ENCODE measurements at regions of chr5 and their contacts with region 1.

Region 1: DNA sequence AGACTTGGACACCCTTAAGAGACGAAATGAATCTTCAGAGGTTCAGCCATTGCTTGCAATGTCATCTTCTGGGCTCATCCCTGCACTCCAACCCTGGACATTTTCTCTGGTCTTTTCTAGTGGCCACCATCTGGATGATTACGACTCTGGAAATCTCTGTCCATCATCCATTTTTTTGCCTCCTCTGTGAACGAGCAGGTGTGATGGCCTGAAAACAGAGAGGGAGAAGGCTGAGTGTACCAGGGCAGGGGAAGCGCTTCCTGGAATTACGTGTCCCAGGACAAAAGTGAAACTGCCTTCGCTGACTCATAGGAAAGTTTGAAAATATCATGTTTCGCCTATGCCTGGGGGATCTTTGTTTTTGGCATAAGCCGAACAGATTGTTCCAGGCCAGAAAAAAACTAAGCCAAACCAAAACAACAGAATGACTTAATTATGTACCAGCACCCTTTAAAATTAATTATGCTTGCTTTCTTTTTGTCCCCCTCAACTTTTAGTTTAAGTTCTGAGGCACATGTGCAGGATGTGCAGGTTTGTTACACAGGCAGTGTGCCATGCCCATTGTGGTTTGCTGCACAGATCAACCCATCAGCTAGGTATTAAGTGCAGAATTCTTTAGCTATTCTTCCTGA is 31.9 kb downstream of the ANKRD33B start:
- DNase-seq: peak; percentile 28
- H3K4me3 Mint-ChIP-seq: peak overlapping the region; percentile 7
- H3K27ac Mint-ChIP-seq: peak overlapping the region; percentile 79
- H3K4me1 Mint-ChIP-seq: peaks cover 69% of the 10 kb centered on the region
- H3K27me3 Mint-ChIP-seq: no peaks in the 10 kb centered on the region

Region 2: GRCh38 chr5:10577371-10578292 is 18.2 kb before region 1 on chr5:
- intact Hi-C with region 1: loop called (anchors 1 kb)
- DNase-seq: no peak
- H3K4me3 Mint-ChIP-seq: no peak overlapping the region
- H3K27ac Mint-ChIP-seq: peak overlapping the region; percentile 30
- H3K4me1 Mint-ChIP-seq: peaks cover 66% of the 10 kb centered on the region
- H3K27me3 Mint-ChIP-seq: no peaks in the 10 kb centered on the region

Region 3: GRCh38 chr5:10607666-10608073 is 11.9 kb after region 1 on chr5:
- intact Hi-C with region 1: loop called (anchors 1 kb)
- DNase-seq: no peak
- H3K4me3 Mint-ChIP-seq: peak overlapping the region; percentile 77
- H3K27ac Mint-ChIP-seq: peak overlapping the region; percentile 96
- H3K4me1 Mint-ChIP-seq: peaks cover 45% of the 10 kb centered on the region
- H3K27me3 Mint-ChIP-seq: no peaks in the 10 kb centered on the region

Region 4: GRCh38 chr5:10655161-10655971 is 59.6 kb after region 1 on chr5:
- intact Hi-C with region 1: no loop called
- DNase-seq: no peak
- H3K4me3 Mint-ChIP-seq: no peak overlapping the region
- H3K27ac Mint-ChIP-seq: no peak overlapping the region
- H3K4me1 Mint-ChIP-seq: no peaks in the 10 kb centered on the region
- H3K27me3 Mint-ChIP-seq: no peaks in the 10 kb centered on the region

Region 5: DNA sequence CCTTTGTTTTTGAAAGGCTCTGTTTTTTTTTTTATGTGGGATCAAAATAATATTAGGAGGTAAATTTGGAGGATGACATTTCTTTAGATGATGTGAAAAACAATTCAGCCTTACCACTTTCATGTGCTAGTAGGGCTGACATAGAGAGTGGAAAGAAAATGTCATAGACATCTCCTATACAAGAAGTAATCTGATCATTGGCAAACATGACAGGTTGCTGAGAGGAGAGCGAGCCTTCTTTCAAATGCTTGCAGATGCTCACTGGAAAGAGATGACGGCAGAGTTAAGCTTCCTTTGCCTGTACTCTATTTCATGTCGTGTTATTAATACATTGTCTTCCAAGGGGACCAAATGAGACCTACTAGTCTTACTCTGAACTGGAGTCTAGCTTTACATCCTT is 325.4 kb after region 1 on chr5:
- intact Hi-C with region 1: no loop called
- DNase-seq: no peak
- H3K4me3 Mint-ChIP-seq: no peak overlapping the region
- H3K27ac Mint-ChIP-seq: no peak overlapping the region
- H3K4me1 Mint-ChIP-seq: no peaks in the 10 kb centered on the region
- H3K27me3 Mint-ChIP-seq: no peaks in the 10 kb centered on the region

Measured in activated T-helper 2 cell treated with anti-CD3 and anti-CD28 coated beads, Interferon-gamma antibody, Interleukin-2, Interleukin-4, amounts not matched to agents 10 μg/mL and 5 μg/mL and 100 μg/mL, durations not matched to agents 14 hours and 24 hours and 36 hours (primary cell).